ENCODE measurements at regions of chr3 and their contacts with region 1.

Region 1: GRCh38 chr3:194315088-194315964 is 35.8 kb downstream of the CPN2 start:
- DNase-seq: peak; percentile 92
- ATAC-seq: peak; percentile 89

Region 2: GRCh38 chr3:193780810-193781472 is 534.4 kb before region 1 on chr3:
- intact Hi-C with region 1: loop called (anchors 1 kb)
- DNase-seq: peak; percentile 83
- ATAC-seq: peak; percentile 92

Region 3: GRCh38 chr3:193788189-193788991 is 526.9 kb before region 1 on chr3:
- intact Hi-C with region 1: loop called (anchors 2 kb)
- DNase-seq: peak; percentile 70
- ATAC-seq: peak; percentile 87

Region 4: DNA sequence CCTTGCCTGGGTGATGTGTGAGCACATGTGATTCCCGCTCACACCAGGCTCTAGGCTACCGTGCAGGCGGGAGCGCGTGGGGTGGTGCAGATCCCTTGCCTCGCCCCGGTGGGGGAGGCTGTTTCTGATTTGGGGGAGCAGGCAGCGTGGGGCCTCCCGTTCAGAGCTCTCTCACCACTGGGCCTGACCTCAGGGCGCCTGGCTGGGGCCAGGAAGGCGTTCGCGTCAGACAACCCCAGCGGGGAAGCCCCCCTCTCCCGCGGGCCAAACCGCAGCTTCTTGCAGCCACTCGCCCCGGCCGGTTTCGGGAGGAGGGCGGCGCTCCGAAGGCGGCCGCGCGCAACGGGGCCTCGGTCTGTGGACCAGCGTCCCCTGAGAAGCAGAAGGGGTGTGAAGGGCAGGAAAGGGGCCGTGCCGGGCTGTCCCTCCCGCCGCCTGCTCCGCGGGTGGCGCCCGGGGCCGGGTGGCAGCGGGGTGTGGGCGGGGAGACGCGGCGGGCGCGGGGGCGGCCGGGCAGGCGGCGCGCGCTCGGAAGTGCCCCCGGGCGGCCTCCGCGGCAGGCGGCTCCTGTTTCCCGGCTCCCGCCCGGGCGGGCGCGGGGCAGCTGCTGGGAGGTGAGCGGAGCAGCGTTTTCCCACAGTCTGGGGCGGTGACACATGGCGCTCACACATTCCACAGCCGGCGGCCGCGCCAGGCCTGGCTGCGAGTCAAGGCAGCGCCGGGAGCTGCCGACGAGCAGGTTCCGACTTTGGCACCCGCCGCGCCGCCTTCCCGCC is 244.5 kb before region 1 on chr3:
- intact Hi-C with region 1: loop called (anchors 5 kb)
- DNase-seq: peak; percentile 92
- ATAC-seq: peak; percentile 89

Region 5: DNA sequence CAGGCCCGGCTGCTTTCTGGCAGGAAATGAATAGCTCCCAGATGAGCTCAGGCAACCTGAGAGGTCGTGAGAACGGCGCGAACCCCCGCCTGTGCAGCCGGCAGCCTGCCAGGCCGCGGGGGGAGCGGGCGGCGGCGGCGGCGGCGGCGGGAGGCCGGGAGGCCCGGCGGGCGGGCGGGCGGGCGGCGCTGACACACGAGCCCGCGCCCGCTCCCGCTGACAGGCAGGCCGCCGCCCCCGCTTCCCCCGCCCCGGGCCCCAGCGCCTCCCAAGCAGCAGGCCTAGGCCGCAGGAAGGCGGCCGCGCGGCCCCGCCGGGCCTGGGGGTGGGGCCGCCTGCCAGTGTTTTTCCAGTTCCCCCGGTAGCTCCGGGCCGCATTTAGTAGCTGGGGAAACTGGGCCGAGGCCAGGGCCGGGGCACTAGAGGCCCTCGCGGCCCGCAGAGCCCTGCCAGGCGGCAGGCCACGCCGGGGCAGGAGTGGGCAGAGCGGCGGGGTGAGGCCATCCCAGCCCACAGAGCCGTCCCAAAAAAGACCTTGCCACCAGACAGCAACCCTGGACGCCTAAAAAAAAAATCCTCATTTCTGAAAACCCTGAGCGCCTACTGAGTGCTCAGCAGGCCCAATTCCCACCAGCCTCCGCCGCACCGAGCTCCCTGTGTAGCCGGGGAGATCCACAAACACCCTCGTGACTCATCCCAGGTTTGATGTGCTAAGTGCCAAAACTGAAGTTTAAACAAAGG is 173.7 kb before region 1 on chr3:
- intact Hi-C with region 1: loop called (anchors 1 kb)
- DNase-seq: peak; percentile 94
- ATAC-seq: peak; percentile 85

Region 6: GRCh38 chr3:194166682-194167479 is 148.4 kb before region 1 on chr3:
- intact Hi-C with region 1: loop called (anchors 5 kb)
- DNase-seq: no peak
- ATAC-seq: peak; percentile 68

Region 7: GRCh38 chr3:194265483-194265892 is 49.8 kb before region 1 on chr3:
- intact Hi-C with region 1: loop called (anchors 5 kb)
- DNase-seq: peak; percentile 95
- ATAC-seq: peak; percentile 83

Measured in Right ventricle myocardium inferior (tissue), 1 donor.